ENCODE measurements at regions of chr1 and their contacts with region 1.

Region 1: GRCh38 chr1:175129997-175130648 is 62.5 kb downstream of the KIAA0040 start:
- DNase-seq: no peak
- H3K4me3 ChIP-seq: no peak overlapping the region
- H3K4me3 Mint-ChIP-seq: no peak overlapping the region
- H3K27ac ChIP-seq: no peak overlapping the region
- H3K27ac Mint-ChIP-seq: no peak overlapping the region
- H3K4me1 ChIP-seq: no peaks in the 10 kb centered on the region
- H3K4me1 Mint-ChIP-seq: no peaks in the 10 kb centered on the region
- H3K27me3 ChIP-seq: no peaks in the 10 kb centered on the region
- H3K27me3 Mint-ChIP-seq: peaks cover 6 to 15% of the 10 kb centered on the region in 2 donors

Region 2: DNA sequence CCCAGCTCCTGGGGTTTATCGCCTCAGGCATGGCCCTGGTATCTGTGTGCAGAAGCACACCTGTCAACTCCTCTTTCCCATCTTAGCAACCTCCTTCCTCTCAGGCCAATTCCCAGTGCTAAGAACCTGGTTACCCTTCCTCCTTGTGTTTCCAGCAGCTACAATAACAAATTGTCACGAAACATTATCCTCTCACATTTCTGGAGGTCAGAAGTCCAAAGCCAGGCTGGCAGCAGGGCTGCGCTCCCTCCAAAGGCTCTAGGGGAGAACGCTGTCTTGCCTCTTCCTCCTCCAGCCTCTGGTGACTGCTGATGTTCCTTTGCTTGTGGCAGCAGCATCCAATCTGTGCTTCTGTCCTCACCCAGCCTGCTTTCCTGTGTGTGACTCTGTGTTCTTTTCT is 96.2 kb before region 1 on chr1:
- CTCF ChIA-PET with region 1: interaction called, 39 read pairs
- POLR2A ChIA-PET with region 1: no interaction called
- DNase-seq: no peak
- H3K4me3 ChIP-seq: no peak overlapping the region
- H3K4me3 Mint-ChIP-seq: no peak overlapping the region
- H3K27ac ChIP-seq: no peak overlapping the region
- H3K27ac Mint-ChIP-seq: no peak overlapping the region
- H3K4me1 ChIP-seq: peaks cover 4% of the 10 kb centered on the region
- H3K4me1 Mint-ChIP-seq: peaks cover 7 to 10% (median 9%) of the 10 kb centered on the region in 3 donors
- H3K27me3 ChIP-seq: no peaks in the 10 kb centered on the region
- H3K27me3 Mint-ChIP-seq: peaks cover 5 to 11% of the 10 kb centered on the region in 2 donors

Region 3: GRCh38 chr1:175075572-175076568 is 54.3 kb before region 1 on chr1:
- CTCF ChIA-PET with region 1: no interaction called
- POLR2A ChIA-PET with region 1: no interaction called
- DNase-seq: no peak
- H3K4me3 ChIP-seq: no peak overlapping the region
- H3K4me3 Mint-ChIP-seq: no peak overlapping the region
- H3K27ac ChIP-seq: no peak overlapping the region
- H3K27ac Mint-ChIP-seq: peak overlapping the region in 1 of 8 donors; percentile 33
- H3K4me1 ChIP-seq: no peaks in the 10 kb centered on the region
- H3K4me1 Mint-ChIP-seq: peaks cover 7 to 9% (median 8%) of the 10 kb centered on the region in 3 donors
- H3K27me3 ChIP-seq: no peaks in the 10 kb centered on the region
- H3K27me3 Mint-ChIP-seq: peaks cover 13 to 57% of the 10 kb centered on the region in 2 donors

Region 4: DNA sequence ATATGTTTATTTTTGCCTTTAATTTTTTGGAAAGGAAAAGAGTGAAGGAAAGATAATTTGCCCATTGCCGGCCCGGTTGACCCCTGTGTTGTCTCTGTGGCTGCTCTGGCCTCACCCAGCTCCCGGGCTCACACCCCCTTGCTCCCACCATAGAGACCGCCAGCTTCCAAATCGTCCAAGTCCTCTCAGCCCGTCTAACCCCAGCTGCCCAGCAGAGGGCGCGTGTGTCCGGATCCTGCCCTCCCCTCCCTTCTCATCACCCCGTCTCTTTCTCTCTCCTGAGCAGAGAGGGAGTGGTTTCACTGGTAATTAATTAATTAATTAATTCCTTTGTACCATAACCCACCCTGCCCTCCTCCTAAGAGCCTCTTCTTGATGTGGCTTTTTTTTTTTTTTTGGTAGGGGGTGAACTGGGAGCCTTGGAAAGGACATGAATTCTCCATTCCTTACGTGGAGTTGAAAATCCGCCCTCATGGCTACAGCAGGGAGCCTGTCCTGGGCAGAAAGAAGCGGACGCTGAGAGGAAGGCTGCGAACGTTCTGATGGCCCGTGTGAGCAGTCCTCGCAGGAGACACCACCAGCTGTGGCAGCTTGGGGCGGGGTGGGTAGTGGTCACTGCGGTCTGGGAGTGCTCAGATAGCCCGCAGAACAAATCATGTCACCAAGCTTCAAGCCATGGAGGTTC is 16.5 kb after region 1 on chr1:
- CTCF ChIA-PET with region 1: interaction called, 25 read pairs
- POLR2A ChIA-PET with region 1: no interaction called
- DNase-seq: peak; percentile 31 to 73 (median 52)
- H3K4me3 ChIP-seq: no peak overlapping the region
- H3K4me3 Mint-ChIP-seq: no peak overlapping the region
- H3K27ac ChIP-seq: no peak overlapping the region
- H3K27ac Mint-ChIP-seq: no peak overlapping the region
- H3K4me1 ChIP-seq: no peaks in the 10 kb centered on the region
- H3K4me1 Mint-ChIP-seq: peaks cover 2 to 9% (median 6%) of the 10 kb centered on the region in 3 donors
- H3K27me3 ChIP-seq: peaks cover 2% of the 10 kb centered on the region
- H3K27me3 Mint-ChIP-seq: peaks cover 30 to 32% of the 10 kb centered on the region in 2 donors

Measured in CD8-positive, alpha-beta memory T cell (primary cell).